ENCODE measurements at regions of chr11 and their contacts with region 1.

Region 1: GRCh38 chr11:115379528-115379927 is 124.7 kb downstream of the CADM1 start:
- DNase-seq: no peak
- ATAC-seq: no peak
- H3K4me3 ChIP-seq: no peak overlapping the region
- H3K27ac ChIP-seq: no peak overlapping the region
- H3K4me1 ChIP-seq: peaks cover 44% of the 10 kb centered on the region
- H3K27me3 ChIP-seq: no peaks in the 10 kb centered on the region
- CTCF ChIP-seq: no peak
- EP300 ChIP-seq: no peak
- POLR2A ChIP-seq: no peak
- RAD21 ChIP-seq: no peak

Region 2: DNA sequence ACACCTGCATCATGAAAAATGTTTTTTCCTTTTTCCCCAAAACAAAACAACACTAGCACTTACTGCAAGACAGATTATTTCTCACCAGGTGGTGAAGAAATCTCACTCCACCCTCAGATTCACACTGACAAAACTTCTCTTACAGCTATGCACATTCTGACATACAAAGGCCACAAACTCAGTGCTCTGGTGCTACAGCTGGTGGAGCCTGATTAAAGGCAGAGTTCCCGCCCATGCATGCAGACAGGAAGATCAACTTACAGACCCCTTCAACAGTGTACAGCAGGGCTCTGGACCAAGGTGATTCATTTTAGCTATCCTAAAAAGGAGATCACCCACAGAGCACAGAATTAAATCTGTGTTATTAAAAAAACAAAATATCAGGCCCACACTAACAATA is 12.1 kb after region 1 on chr11:
- CTCF ChIA-PET with region 1: no interaction called
- POLR2A ChIA-PET with region 1: no interaction called
- in situ Hi-C with region 1: no loop called
- intact Hi-C with region 1: no loop called
- DNase-seq: no peak
- ATAC-seq: no peak
- H3K4me3 ChIP-seq: no peak overlapping the region
- H3K27ac ChIP-seq: no peak overlapping the region
- H3K4me1 ChIP-seq: peaks cover 22% of the 10 kb centered on the region
- H3K27me3 ChIP-seq: no peaks in the 10 kb centered on the region
- CTCF ChIP-seq: no peak
- EP300 ChIP-seq: no peak
- POLR2A ChIP-seq: no peak
- RAD21 ChIP-seq: no peak

Region 3: GRCh38 chr11:115409691-115410220 is 30.2 kb after region 1 on chr11:
- CTCF ChIA-PET with region 1: no interaction called
- POLR2A ChIA-PET with region 1: no interaction called
- in situ Hi-C with region 1: no loop called
- intact Hi-C with region 1: loop called (anchors 2 kb)
- DNase-seq: peak; percentile 94
- ATAC-seq: peak; percentile 98
- H3K4me3 ChIP-seq: peak overlapping the region; percentile 2 to 35 (median 17); a peak in 3 of 6 replicates
- H3K27ac ChIP-seq: peak overlapping the region; percentile 49
- H3K4me1 ChIP-seq: peaks cover 49% of the 10 kb centered on the region
- H3K27me3 ChIP-seq: no peaks in the 10 kb centered on the region
- CTCF ChIP-seq: no peak
- EP300 ChIP-seq: peak in 1 of 2 experiments; percentile 75; a peak in 3 of 4 replicates
- POLR2A ChIP-seq: no peak
- RAD21 ChIP-seq: peak; percentile 39; the same call in 1 of the 2 replicates

Region 4: DNA sequence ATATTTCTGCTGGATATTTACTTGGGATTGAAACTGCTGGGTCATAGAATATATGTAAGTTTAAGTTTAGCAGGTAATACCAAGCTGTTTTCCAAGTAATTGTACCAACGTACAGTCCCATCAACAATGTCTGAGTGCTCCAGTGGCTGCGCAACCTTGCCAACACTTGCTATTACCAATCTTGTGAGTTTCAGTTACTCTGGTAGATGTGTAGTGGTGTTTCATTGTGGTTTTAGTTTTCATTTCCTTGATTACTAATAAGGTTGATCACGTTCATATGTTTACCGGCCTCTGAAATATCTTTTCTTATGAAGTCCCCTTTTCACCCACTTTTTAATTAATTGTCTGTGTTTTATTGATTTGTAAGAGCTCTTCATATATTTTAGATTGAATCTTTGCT is 495.3 kb after region 1 on chr11:
- CTCF ChIA-PET with region 1: no interaction called
- POLR2A ChIA-PET with region 1: no interaction called
- in situ Hi-C with region 1: no loop called
- intact Hi-C with region 1: no loop called
- DNase-seq: no peak
- ATAC-seq: no peak
- H3K4me3 ChIP-seq: no peak overlapping the region
- H3K27ac ChIP-seq: no peak overlapping the region
- H3K4me1 ChIP-seq: no peaks in the 10 kb centered on the region
- H3K27me3 ChIP-seq: no peaks in the 10 kb centered on the region
- CTCF ChIP-seq: no peak
- EP300 ChIP-seq: no peak
- POLR2A ChIP-seq: no peak
- RAD21 ChIP-seq: no peak

Measured in HepG2 (cell line).